Natural killer cell (primary cell): ENCODE measurements at regions of chr1 and their contacts with region 1.

Region 1: GRCh38 chr1:46179138-46180081 is 3.1 kb upstream of the P3R3URF start:
- DNase-seq: peak; percentile 56 to 85
- ATAC-seq: peak; percentile 68 to 72 (median 68)
- H3K4me3 ChIP-seq: no peak overlapping the region
- H3K4me3 Mint-ChIP-seq: no peak overlapping the region
- H3K27ac ChIP-seq: no peak overlapping the region
- H3K27ac Mint-ChIP-seq: no peak overlapping the region
- H3K4me1 ChIP-seq: peaks cover 14% of the 10 kb centered on the region
- H3K4me1 Mint-ChIP-seq: peaks cover 8% of the 10 kb centered on the region in 2 donors
- H3K27me3 ChIP-seq: no peaks in the 10 kb centered on the region
- H3K27me3 Mint-ChIP-seq: no peaks in the 10 kb centered on the region
- CTCF ChIP-seq: peak; percentile 90

Region 2: GRCh38 chr1:46036894-46037839 is 142.2 kb before region 1 on chr1:
- intact Hi-C with region 1: loop called (anchors 1 kb)
- DNase-seq: peak; percentile 80 to 90
- ATAC-seq: peak; percentile 81 to 92 (median 90)
- H3K4me3 ChIP-seq: no peak overlapping the region
- H3K4me3 Mint-ChIP-seq: no peak overlapping the region
- H3K27ac ChIP-seq: no peak overlapping the region
- H3K27ac Mint-ChIP-seq: no peak overlapping the region
- H3K4me1 ChIP-seq: peaks cover 9% of the 10 kb centered on the region
- H3K4me1 Mint-ChIP-seq: no peaks in the 10 kb centered on the region
- H3K27me3 ChIP-seq: no peaks in the 10 kb centered on the region
- H3K27me3 Mint-ChIP-seq: no peaks in the 10 kb centered on the region
- CTCF ChIP-seq: peak; percentile 97

Region 3: GRCh38 chr1:46244656-46245371 is 65.4 kb after region 1 on chr1:
- intact Hi-C with region 1: no loop called
- DNase-seq: peak in 1 of 2 donors; percentile 57
- ATAC-seq: no peak
- H3K4me3 ChIP-seq: no peak overlapping the region
- H3K4me3 Mint-ChIP-seq: no peak overlapping the region
- H3K27ac ChIP-seq: no peak overlapping the region
- H3K27ac Mint-ChIP-seq: no peak overlapping the region
- H3K4me1 ChIP-seq: peaks cover 19% of the 10 kb centered on the region
- H3K4me1 Mint-ChIP-seq: peaks cover 0 to 21% of the 10 kb centered on the region in 2 donors
- H3K27me3 ChIP-seq: no peaks in the 10 kb centered on the region
- H3K27me3 Mint-ChIP-seq: no peaks in the 10 kb centered on the region
- CTCF ChIP-seq: peak; percentile 15